ENCODE measurements at regions of chr4 and their contacts with region 1.

Region 1: GRCh38 chr4:168923526-168924194 is 86.4 kb downstream of the CBR4 start:
- DNase-seq: peak; percentile 66 to 80 (median 71)
- H3K4me3 ChIP-seq: no peak overlapping the region
- H3K27ac ChIP-seq: no peak overlapping the region
- H3K4me1 ChIP-seq: no peaks in the 10 kb centered on the region
- H3K27me3 ChIP-seq: no peaks in the 10 kb centered on the region

Region 2: DNA sequence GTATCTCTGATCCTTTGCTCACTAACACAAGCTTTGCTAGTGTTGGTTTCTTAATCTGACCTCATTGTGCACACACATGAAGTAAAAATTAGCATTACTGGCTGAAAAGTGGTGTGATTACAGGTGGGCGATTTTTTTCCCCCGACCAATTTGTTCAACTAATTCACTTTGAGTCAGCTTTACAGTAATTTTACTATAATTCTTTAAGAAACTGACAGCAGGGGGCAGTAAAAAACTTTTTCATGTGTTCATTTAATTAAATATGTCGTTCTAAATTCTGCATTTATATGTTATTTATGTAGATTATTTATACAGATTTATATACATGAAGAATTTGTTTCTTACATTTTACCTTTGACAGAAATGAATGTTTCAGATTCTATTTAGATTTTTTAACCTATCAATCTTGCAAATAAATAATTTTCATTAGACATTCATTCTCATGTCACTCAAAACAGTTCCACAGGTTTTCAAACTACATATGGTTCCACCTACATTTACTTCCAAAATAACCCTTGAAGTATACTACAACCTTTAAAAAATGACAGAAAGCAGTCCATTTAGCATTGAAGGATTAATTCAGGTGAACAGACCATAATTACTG is 409.3 kb before region 1 on chr4:
- CTCF ChIA-PET with region 1: interaction called, 16 read pairs
- POLR2A ChIA-PET with region 1: no interaction called
- DNase-seq: peak; percentile 33 to 70 (median 63)
- H3K4me3 ChIP-seq: no peak overlapping the region
- H3K27ac ChIP-seq: no peak overlapping the region
- H3K4me1 ChIP-seq: peaks cover 0 to 4% (median 0%) of the 10 kb centered on the region in 4 experiments
- H3K27me3 ChIP-seq: no peaks in the 10 kb centered on the region

Region 3: GRCh38 chr4:168585168-168586091 is 338.2 kb before region 1 on chr4:
- CTCF ChIA-PET with region 1: interaction called, 35 read pairs
- POLR2A ChIA-PET with region 1: no interaction called
- DNase-seq: peak; percentile 43 to 63 (median 53)
- H3K4me3 ChIP-seq: no peak overlapping the region
- H3K27ac ChIP-seq: no peak overlapping the region
- H3K4me1 ChIP-seq: no peaks in the 10 kb centered on the region
- H3K27me3 ChIP-seq: no peaks in the 10 kb centered on the region

Region 4: GRCh38 chr4:168710353-168710946 is 213.2 kb before region 1 on chr4:
- CTCF ChIA-PET with region 1: interaction called, 141 read pairs
- POLR2A ChIA-PET with region 1: no interaction called
- DNase-seq: peak; percentile 65 to 84 (median 83)
- H3K4me3 ChIP-seq: no peak overlapping the region
- H3K27ac ChIP-seq: no peak overlapping the region
- H3K4me1 ChIP-seq: peaks cover 0 to 16% (median 8%) of the 10 kb centered on the region in 4 experiments
- H3K27me3 ChIP-seq: no peaks in the 10 kb centered on the region

Region 5: GRCh38 chr4:168972596-168972995 is 48.9 kb after region 1 on chr4:
- CTCF ChIA-PET with region 1: no interaction called
- POLR2A ChIA-PET with region 1: no interaction called
- DNase-seq: no peak
- H3K4me3 ChIP-seq: no peak overlapping the region
- H3K27ac ChIP-seq: no peak overlapping the region
- H3K4me1 ChIP-seq: no peaks in the 10 kb centered on the region
- H3K27me3 ChIP-seq: no peaks in the 10 kb centered on the region

Region 6: DNA sequence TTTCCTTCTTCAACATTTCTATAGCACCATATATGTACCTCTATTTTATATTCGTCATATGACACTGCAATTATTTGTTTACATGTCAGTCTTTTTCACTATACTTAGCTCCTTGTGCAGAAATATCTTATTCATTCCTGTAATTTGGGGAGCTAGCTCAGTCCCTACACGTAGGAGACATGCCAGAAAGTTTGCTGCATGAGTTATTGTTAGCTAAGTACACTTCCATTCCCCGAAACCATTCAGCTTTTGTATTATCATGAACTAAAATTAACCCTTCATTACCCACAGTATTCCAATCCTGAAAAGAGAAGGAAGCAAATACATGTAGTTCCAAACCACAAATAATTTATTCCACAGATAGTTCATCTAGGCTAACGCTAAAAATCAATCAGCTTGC is 76.1 kb after region 1 on chr4:
- CTCF ChIA-PET with region 1: interaction called, 31 read pairs
- POLR2A ChIA-PET with region 1: no interaction called
- DNase-seq: no peak
- H3K4me3 ChIP-seq: no peak overlapping the region
- H3K27ac ChIP-seq: no peak overlapping the region
- H3K4me1 ChIP-seq: no peaks in the 10 kb centered on the region
- H3K27me3 ChIP-seq: no peaks in the 10 kb centered on the region

Region 7: DNA sequence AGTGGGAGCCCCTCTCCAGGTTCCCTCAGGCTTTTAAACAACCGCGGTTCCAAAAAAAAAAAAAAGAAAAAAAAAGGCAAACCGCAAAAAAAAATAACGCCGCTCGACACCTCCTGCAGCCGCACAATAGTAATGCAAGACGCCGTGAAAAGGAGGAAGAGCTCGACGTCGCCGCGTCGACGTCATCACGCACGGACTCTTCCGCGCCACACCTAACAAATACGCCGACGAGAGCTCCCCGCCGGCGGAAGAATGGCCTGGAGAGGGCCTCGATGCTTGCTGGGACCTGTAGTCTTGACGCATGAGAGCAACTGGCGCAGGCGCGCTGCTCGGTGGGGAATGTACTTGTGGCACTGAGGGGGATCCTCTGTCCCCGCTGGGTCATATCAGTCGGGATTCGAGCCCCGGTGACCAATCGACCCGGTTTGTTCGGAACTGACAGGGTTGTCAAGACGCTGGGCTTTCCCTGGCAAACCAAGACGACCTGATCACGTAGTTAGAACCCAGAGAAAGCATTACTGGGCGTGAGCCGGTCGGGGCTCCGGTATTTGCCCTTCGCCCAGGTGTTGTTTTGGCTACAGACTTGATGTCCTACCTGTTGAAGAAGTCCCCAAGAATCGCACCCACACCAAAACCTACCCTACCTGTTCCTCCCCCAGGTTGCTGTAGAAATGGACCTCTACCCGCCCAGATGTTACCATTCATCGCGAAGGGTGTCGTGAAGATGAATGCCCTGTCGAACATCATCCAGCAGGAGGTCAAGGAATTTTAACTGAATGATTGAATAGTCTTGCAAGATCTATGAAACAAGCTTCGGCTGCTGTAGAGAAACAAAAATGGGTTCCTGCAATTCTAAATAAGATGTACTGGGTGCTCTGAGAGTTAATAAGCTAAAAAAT is 86.7 kb after region 1 on chr4 and contains the start of gene CBR4:
- CTCF ChIA-PET with region 1: interaction called, 12 read pairs
- POLR2A ChIA-PET with region 1: no interaction called
- DNase-seq: peak; percentile 99 to 100 (median 100)
- H3K4me3 ChIP-seq: peak within 1 kb of the TSS; percentile 60 to 99 (median 92)
- H3K27ac ChIP-seq: peak within 1 kb of the TSS; percentile 84 to 94
- H3K4me1 ChIP-seq: peaks cover 10 to 28% (median 17%) of the 10 kb centered on the region in 4 experiments
- H3K27me3 ChIP-seq: no peaks in the 10 kb centered on the region

Region 8: DNA sequence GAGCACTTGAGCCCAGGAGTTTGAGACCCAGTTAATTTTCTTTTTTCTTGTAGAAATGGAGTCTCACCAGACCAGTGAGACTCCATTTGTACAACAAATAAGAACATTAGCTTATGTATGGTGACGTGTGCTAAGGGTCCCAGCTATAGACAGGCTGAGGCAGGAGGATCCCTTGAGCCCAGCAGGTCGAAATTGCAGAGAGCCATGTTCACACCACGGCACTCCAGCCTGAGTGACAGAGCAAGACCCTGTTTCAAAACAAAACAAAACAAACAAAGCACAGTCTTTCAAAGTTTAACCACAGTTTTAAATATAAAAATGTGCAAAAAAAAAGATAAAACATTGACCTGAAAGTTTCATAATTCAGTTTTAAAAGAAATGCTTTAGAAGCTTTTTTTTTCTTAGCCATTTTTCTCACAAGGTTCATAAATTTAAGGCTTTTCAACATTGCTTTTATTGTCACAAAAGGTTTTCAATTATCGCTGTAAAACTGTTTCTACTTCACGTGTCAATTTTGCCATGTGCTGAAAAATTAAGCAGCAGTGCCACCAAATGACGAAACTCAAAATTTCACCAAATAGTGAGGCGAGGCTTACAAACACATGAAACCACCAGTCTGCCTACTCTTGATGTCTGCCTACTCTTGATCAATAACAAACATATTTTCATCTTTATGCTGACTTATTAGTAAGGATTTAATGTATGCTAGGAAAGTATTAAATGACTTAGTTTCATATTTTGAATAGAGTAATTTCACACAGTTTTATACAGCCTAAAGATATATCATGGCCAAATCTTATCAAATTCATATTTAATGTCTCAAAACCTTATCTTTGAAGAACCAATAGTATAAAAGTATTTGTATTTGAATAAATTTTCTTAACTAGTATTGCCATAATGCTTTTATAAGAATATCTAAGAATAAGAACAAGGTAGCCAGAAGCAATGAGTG is 562.4 kb after region 1 on chr4:
- CTCF ChIA-PET with region 1: interaction called, 32 read pairs
- POLR2A ChIA-PET with region 1: no interaction called
- DNase-seq: peak; percentile 55 to 76 (median 69)
- H3K4me3 ChIP-seq: no peak overlapping the region
- H3K27ac ChIP-seq: no peak overlapping the region
- H3K4me1 ChIP-seq: peaks cover 0 to 4% (median 2%) of the 10 kb centered on the region in 4 experiments
- H3K27me3 ChIP-seq: no peaks in the 10 kb centered on the region

Measured in common myeloid progenitor, CD34-positive (primary cell).